ENCODE measurements at regions of chr7 and their contacts with region 1.

Region 1: DNA sequence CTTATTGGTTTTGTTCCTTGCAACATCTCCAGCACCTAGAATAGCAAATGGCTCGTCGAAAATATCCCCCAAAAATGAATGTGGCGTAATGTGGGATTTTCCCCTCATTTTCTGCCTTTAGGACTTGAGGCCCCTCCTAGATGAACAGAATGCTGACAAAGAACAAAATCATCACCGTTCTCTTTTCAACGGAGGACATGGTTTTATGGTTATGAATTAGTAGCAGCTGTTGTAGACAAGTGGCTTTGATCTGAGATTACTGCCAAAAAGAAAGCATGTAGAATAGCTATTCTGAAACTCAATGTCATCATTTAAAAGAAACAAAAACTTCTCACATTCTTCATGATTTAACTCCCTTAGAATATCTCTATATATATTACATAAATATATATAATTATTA is 17.2 kb upstream of the CALN1 start:
- DNase-seq: no peak
- H3K4me3 ChIP-seq: no peak overlapping the region
- CTCF ChIP-seq: no peak
- POLR2A ChIP-seq: no peak

Region 2: DNA sequence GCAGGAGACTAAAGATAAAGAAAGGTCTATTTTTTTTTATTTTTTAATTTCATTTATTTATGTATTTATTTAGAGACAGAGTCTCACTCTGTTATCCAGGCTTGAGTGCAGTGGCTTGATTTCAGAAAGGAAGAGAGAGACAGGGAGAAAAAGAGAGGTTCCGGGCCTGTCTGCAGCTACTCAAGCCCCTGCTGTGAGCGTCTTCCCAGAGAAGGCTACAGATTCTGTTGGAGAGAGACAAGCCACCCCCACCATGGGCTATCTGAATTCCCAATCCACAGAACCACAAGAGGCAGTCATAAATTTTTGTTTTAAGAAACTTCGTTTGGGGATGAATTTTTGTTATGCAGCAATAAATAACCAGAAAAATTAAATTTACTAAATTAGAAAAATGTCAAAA is 85.3 kb before region 1 on chr7:
- intact Hi-C with region 1: no loop called
- DNase-seq: no peak
- H3K4me3 ChIP-seq: no peak overlapping the region
- CTCF ChIP-seq: no peak
- POLR2A ChIP-seq: no peak

Region 3: GRCh38 chr7:73446682-73447081 is 1017.4 kb after region 1 on chr7:
- intact Hi-C with region 1: loop called (anchors 10 kb)
- DNase-seq: no peak
- H3K4me3 ChIP-seq: no peak overlapping the region
- CTCF ChIP-seq: no peak
- POLR2A ChIP-seq: no peak